HCT116 (cell line): ENCODE measurements at regions of chr12 and their contacts with region 1.

Region 1: DNA sequence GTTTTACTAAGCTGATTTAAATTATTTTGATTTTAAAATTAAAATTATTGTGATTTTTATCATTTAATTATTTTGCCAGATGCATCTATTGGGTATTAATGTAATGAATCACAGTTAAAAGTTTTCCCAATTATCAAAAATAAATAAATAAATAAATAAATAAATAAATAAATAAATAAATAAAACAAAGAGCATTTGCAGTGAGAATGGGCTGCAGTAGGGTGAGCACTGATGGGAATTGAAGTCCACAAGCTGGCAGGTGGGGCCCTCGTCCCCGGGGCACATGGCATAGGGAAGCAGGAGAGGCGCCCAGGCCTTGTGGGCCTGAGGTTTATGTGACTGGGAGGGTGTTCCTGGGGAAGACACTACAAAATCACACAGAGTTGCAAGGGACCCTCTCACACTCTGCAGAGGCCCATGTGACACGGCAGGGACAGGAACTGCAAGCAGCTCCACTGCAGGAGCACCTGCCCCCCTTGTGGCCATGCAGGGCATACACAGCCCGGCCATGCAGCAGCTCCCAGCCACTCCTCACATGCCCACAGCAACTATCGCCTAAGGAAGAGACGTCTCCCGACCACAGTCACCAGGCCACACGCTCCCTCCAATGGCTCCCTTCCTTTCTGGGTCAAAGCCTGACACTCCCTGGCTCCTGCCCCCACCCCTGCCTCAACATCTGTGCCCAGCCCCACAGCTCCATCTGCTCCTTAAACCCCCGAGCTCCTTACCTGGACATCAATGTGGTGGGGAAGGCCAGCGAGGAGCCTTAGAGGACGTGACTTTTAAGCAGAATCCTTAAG is 256.3 kb upstream of the SFSWAP start:
- DNase-seq: peak; percentile 76
- ATAC-seq: peak; percentile 98
- H3K4me3 ChIP-seq: no peak overlapping the region
- H3K27ac ChIP-seq: no peak overlapping the region; the same call in 1 of the 2 replicates
- H3K4me1 ChIP-seq: peaks cover 2 to 13% of the 10 kb centered on the region in 2 experiments; a peak in 2 of 4 replicates
- H3K27me3 ChIP-seq: 0 out of 2 replicates have a peak, but pooled peaks cover 5% of the 10 kb centered on the region
- CTCF ChIP-seq: peak; percentile 75 to 91 (median 82)
- POLR2A ChIP-seq: no peak
- RAD21 ChIP-seq: peak; percentile 84

Region 2: DNA sequence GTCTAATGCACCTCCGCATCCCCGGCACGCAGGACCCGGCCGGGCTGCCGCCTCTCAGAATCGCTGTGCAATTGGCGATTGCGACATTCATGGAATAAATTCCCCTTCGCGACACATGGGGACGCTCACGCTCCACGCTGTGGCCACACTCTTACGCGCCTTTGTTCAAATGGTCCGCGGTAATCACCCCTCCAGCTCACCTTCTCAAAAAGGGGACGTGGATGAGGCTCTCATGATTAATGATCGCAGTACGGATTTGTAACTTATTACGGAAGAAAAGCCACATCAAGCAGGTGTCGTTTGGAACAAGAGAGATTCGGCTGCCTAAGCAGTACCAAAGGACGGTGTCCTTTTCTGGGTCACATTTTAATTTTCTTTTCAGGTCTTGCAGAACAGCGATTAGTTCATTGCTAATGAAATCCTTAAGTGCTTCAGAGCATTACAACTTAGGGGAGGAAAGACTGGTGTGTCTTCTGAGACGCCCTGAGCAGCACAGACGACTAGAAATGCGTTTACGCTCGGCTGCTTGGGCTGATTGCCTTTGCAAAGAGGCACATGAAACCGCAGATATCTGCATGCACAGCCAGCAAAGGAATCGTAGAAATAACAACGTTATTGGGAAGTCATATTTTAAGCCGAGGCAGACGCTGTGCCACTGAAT is 538.2 kb before region 1 on chr12:
- CTCF ChIA-PET with region 1: interaction called, 5 read pairs
- POLR2A ChIA-PET with region 1: no interaction called
- RAD21 ChIA-PET with region 1: no interaction called
- intact Hi-C with region 1: loop called (anchors 1 kb)
- DNase-seq: peak; percentile 38
- ATAC-seq: peak; percentile 94
- H3K4me3 ChIP-seq: peak overlapping the region in 1 of 2 experiments; percentile 11; a peak in 2 of 4 replicates
- H3K27ac ChIP-seq: no peak overlapping the region
- H3K4me1 ChIP-seq: peaks cover 2 to 6% of the 10 kb centered on the region in 2 experiments; a peak in 1 of 4 replicates
- H3K27me3 ChIP-seq: peaks cover 10% of the 10 kb centered on the region; the same call in 1 of the 2 replicates
- CTCF ChIP-seq: peak; percentile 78 to 92 (median 87)
- POLR2A ChIP-seq: no peak
- RAD21 ChIP-seq: peak; percentile 97

Region 3: DNA sequence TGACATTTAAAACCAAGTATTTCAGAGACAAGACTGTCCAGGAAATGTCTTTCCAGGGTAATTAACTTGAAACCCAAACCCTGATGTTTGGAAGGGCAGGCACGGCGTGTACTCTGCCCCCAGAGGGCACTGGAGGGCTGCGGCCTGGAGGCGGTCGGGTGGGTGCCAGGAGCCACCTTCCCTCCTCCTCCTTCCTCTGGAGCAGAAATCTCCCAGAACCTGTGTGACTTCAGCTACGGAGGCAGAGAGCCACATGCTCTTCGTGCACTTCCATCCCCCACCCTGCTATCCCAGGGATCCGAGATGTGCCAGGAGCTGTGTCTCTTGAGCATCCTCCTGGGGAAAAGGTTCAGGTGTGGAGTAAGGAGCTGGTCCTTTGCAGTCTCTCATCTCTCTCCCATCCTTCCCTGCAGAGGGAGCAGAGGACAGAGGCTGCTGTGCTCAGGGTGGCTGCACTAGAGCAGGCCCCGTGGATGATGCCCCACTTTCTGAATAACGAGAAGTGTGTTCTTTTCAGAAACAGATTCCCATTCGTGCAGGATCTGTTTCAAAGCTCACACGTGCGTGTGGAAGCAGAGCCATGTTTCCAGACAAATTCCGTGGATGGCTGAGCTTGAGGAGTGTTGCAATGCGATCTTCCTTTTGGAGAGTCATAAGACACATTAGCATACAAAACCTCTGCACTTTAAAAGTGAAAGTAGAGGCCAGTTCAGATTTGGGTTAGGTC is 338.1 kb before region 1 on chr12:
- CTCF ChIA-PET with region 1: interaction called, 21 read pairs
- POLR2A ChIA-PET with region 1: interaction called, 3 read pairs
- RAD21 ChIA-PET with region 1: interaction called, 8 to 10 read pairs
- intact Hi-C with region 1: no loop called
- DNase-seq: no peak
- ATAC-seq: peak; percentile 84
- H3K4me3 ChIP-seq: no peak overlapping the region
- H3K27ac ChIP-seq: no peak overlapping the region
- H3K4me1 ChIP-seq: peaks cover 0 to 11% of the 10 kb centered on the region in 2 experiments; a peak in 2 of 4 replicates
- H3K27me3 ChIP-seq: no peaks in the 10 kb centered on the region
- CTCF ChIP-seq: peak; percentile 62 to 74 (median 71)
- POLR2A ChIP-seq: no peak
- RAD21 ChIP-seq: peak; percentile 78

Region 4: DNA sequence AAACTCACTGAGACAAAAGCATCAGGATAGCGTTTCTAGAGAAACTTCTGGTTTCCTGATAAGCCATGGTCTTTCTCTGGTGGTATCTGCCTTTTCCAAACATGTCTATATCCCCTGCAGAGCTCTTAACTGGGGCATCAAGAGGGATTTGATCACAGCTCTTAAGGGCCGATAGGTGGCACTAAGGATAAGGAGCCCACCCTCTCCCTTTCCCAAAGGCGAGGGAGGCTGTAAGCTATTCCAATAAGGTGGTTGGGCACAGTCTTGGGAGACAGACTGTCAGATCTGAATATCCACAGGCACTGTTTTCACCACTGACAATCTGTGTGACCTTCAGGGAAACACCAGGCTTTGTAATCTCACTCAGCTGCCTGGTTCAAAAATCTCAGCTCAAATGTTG is 295.0 kb before region 1 on chr12:
- CTCF ChIA-PET with region 1: interaction called, 13 read pairs
- POLR2A ChIA-PET with region 1: no interaction called
- RAD21 ChIA-PET with region 1: interaction called in 1 of 2 experiments, 3 read pairs
- intact Hi-C with region 1: no loop called
- DNase-seq: peak; percentile 18
- ATAC-seq: peak; percentile 86
- H3K4me3 ChIP-seq: no peak overlapping the region
- H3K27ac ChIP-seq: no peak overlapping the region
- H3K4me1 ChIP-seq: no peaks in the 10 kb centered on the region
- H3K27me3 ChIP-seq: peaks cover 7% of the 10 kb centered on the region; the same call in 1 of the 2 replicates
- CTCF ChIP-seq: peak; percentile 34 to 55 (median 37); a peak in 4 of 6 replicates
- POLR2A ChIP-seq: no peak
- RAD21 ChIP-seq: peak; percentile 67

Region 5: GRCh38 chr12:131583217-131583682 is 128.6 kb after region 1 on chr12:
- CTCF ChIA-PET with region 1: no interaction called
- POLR2A ChIA-PET with region 1: no interaction called
- RAD21 ChIA-PET with region 1: no interaction called
- intact Hi-C with region 1: no loop called
- DNase-seq: no peak
- ATAC-seq: no peak
- H3K4me3 ChIP-seq: no peak overlapping the region
- H3K27ac ChIP-seq: no peak overlapping the region
- H3K4me1 ChIP-seq: no peaks in the 10 kb centered on the region
- H3K27me3 ChIP-seq: peaks cover 20% of the 10 kb centered on the region
- CTCF ChIP-seq: no peak
- POLR2A ChIP-seq: no peak
- RAD21 ChIP-seq: no peak

Region 6: DNA sequence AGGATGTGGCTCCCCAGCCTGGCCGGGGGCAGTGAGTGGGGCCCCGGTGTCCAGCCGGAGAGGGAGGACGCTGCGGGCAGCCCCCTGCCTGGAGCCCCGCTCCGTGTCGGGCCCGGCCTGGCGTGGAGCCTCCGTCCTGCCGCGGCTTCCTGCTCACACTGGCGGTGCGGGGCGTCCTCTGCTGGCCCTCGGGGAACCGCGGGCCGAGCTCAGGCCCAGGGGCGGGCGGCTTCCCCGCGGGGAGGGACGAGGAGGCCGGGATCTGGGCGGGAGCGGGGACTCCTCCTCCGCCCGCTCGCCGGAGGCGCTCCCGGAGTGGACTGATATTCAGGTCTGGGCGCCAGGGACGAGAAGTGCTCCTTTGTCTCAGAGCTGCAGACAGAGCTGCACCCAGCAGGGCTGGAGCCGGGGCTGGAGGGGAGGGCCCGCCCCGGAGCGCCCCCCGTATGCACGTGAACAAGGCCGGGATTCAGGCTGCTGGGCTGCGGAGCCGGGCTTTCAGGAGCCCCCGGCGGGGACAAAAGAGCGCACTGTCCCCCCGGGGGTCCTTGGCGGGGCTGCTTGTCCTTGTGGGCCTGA is 375.8 kb after region 1 on chr12:
- CTCF ChIA-PET with region 1: interaction called, 4 read pairs
- POLR2A ChIA-PET with region 1: no interaction called
- RAD21 ChIA-PET with region 1: interaction called in 1 of 2 experiments, 3 read pairs
- intact Hi-C with region 1: loop called (anchors 5 kb)
- DNase-seq: peak; percentile 23
- ATAC-seq: peak; percentile 71
- H3K4me3 ChIP-seq: peak overlapping the region; percentile 70 to 79
- H3K27ac ChIP-seq: peak overlapping the region; percentile 37; the same call in 1 of the 2 replicates
- H3K4me1 ChIP-seq: peaks cover 12 to 26% of the 10 kb centered on the region in 2 experiments; a peak in 3 of 4 replicates
- H3K27me3 ChIP-seq: no peaks in the 10 kb centered on the region
- CTCF ChIP-seq: peak; percentile 49 to 75 (median 70)
- POLR2A ChIP-seq: no peak
- RAD21 ChIP-seq: peak; percentile 95